ENCODE measurements at regions of chr11 and their contacts with region 1.

Region 1: DNA sequence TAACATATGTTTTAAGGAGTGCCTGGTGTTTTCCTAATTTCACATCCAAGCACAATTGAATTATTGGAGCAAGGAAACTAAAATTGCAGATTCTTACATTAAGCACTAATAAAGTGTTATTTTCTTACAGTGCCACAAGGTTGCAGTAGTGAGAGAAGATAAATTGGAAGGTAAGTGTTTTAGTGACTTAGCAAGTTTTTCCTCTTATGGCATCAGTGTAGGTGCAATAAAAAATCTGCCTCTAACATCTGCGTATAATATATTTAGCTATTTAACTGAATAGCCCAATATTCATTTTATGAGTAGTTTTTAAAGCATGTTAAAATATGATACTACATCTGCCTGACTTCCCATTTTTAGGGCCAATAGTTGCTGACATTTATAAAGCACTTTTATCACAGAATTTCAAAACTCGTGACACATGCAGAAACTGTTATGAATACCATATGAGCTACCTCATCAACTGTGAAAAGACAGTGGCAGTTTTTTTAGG is 19.0 kb downstream of the POLD3 start:
- DNase-seq: peak; percentile 55
- H3K4me3 Mint-ChIP-seq: no peak overlapping the region
- H3K27ac Mint-ChIP-seq: no peak overlapping the region
- H3K4me1 Mint-ChIP-seq: no peaks in the 10 kb centered on the region
- H3K27me3 Mint-ChIP-seq: no peaks in the 10 kb centered on the region
- CTCF ChIP-seq: peak; percentile 38

Region 2: DNA sequence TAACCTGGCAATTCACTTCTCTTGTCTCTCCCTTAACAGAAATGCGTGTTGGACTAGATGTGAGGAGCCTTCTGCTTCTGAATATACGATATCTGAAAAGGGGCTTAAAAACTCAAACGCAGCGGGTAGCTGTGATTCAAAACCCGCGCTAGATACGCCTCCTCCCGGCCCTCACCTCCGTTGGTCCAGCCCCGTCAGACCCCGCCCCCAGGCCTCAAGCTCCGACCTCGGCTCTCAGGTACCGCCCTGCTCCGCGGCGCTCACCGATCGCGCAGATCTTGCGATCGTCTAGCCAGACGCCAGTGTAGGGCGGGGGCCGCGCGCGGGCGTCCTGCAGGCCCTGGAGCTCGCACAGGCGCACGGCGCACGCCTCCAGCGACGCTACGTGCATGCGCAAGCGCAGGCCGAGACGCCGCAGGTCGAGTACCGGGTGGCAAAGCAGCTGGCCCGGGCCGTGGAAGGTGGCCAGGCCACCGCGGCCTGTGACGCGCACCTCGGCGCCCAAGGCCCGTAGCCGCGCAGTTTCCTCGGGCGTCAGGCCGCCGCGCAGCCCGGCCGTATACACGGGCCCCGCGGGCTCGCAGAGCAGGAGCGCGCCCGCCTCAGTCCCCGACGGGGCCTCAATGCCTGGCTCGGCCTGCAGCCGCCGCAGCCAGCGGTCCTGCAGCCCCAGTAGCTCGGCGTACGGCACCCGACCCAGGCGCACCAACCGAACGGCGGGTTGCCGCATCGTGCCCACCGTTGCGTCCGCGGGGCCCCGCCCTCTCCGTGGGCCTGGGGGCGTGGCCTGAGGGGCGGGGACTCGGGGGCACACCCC is 118.2 kb before region 1 on chr11 and contains the start of gene LIPT2:
- CTCF ChIA-PET with region 1: no interaction called
- POLR2A ChIA-PET with region 1: no interaction called
- intact Hi-C with region 1: no loop called
- DNase-seq: peak; percentile 98
- H3K4me3 Mint-ChIP-seq: peak within 1 kb of the TSS; percentile 82
- H3K27ac Mint-ChIP-seq: peak within 1 kb of the TSS; percentile 67
- H3K4me1 Mint-ChIP-seq: peaks cover 11% of the 10 kb centered on the region
- H3K27me3 Mint-ChIP-seq: no peaks in the 10 kb centered on the region
- CTCF ChIP-seq: no peak
- total RNA-seq, gene LIPT2: 3.0 and 7.9 TPM in 2 replicates

Region 3: DNA sequence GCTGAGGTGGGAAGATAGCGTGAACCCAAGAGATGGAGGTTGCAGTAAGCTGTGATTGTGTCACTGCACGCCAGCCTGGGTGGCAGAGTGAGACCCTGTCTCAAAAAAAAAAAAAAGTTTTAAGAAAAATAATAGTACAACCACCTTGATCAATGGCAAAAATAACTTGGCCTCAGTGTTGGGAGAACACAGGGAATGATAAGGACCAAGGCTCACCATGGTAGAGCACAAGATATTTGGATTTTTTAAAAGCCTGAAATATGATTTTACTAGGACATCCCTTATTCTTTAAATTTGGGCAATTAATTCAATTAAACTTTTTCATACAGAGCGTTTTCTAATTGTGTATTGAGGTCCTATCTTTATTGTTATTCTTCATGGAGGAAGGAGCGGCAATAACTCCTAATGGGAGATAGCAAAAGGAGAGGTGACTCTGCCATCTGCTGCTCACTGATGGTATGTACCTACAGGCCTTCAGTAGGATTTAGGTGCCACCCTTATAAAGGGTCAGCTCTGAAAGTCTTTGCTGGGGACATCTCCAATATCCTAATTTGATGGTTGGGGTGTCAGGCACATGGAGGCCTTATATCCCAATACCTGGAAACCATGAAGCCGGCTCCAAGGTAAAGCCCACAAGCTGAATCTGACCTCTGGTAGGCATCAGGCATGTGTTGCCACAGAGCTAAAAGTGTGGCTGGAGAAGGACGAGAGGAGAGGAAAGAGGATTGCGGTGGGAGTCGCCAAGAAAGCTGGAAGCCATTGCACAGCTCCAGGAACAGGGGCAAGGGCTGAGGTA is 41.0 kb before region 1 on chr11:
- CTCF ChIA-PET with region 1: no interaction called
- POLR2A ChIA-PET with region 1: no interaction called
- intact Hi-C with region 1: no loop called
- DNase-seq: peak; percentile 71
- H3K4me3 Mint-ChIP-seq: no peak overlapping the region
- H3K27ac Mint-ChIP-seq: no peak overlapping the region
- H3K4me1 Mint-ChIP-seq: no peaks in the 10 kb centered on the region
- H3K27me3 Mint-ChIP-seq: no peaks in the 10 kb centered on the region
- CTCF ChIP-seq: peak; percentile 83

Region 4: GRCh38 chr11:74592441-74593362 is 18.7 kb before region 1 on chr11 and contains the start of gene POLD3:
- CTCF ChIA-PET with region 1: interaction called, 4 read pairs
- POLR2A ChIA-PET with region 1: interaction called, 12 read pairs
- intact Hi-C with region 1: no loop called
- DNase-seq: peak; percentile 93
- H3K4me3 Mint-ChIP-seq: peak within 1 kb of the TSS; percentile 85
- H3K27ac Mint-ChIP-seq: peak within 1 kb of the TSS; percentile 94
- H3K4me1 Mint-ChIP-seq: peaks cover 20% of the 10 kb centered on the region
- H3K27me3 Mint-ChIP-seq: no peaks in the 10 kb centered on the region
- CTCF ChIP-seq: no peak
- total RNA-seq, gene POLD3: 19.5 and 27.1 TPM in 2 replicates

Measured in MCF 10A (cell line).